Mucosa of descending colon (tissue), 3 donors: ENCODE measurements at regions of chr3 and their contacts with region 1.

Region 1: GRCh38 chr3:71955240-71956068 is 170.5 kb upstream of the PROK2 start:
- DNase-seq: peak; percentile 55 to 84 (median 73)
- ATAC-seq: peak; percentile 73
- H3K4me3 ChIP-seq: no peak overlapping the region
- H3K4me1 ChIP-seq: peaks cover 2% of the 10 kb centered on the region
- CTCF ChIP-seq: peak; percentile 44

Region 2: GRCh38 chr3:71846185-71846584 is 109.3 kb before region 1 on chr3:
- intact Hi-C with region 1: no loop called
- DNase-seq: no peak
- ATAC-seq: no peak
- H3K4me3 ChIP-seq: no peak overlapping the region
- H3K4me1 ChIP-seq: no peaks in the 10 kb centered on the region
- CTCF ChIP-seq: no peak

Region 3: DNA sequence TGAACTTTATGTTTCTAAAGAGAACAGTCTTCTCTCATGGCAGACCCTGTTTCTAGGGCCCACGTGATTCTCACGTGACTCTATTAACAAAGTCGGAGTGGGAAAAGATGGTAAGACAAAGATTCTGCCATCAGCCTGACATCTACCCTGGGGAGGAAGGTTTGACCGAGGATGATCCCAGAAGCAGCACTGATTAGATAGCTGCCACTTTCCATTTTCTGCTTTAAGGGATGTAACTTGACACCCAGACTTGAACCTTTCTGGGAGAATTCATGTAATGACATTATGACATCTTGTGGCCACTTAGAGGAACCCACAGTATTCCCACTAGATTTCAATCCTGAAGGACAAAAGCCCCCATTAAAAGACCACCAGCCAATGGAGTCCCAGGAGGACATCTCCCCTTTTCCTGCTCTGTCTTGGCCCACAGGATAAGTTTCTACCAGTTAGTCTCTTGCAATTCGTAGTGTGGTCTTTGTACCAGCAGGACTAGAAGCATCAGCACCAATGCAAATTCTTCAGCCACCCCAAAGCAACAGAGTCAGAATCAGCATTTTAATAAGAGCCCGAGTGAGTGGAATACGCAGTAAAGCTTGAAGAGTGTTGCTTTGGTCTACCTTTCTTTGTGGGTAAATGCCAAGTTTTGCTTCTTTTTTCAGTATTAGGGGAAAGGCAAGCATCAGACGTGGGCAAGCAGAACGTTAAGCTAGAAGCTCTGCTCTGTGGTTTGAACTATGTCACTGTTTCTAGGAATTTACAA is 310.0 kb after region 1 on chr3:
- intact Hi-C with region 1: loop called in 1 of 2 experiments (anchors 10 kb)
- DNase-seq: no peak
- ATAC-seq: no peak
- H3K4me3 ChIP-seq: no peak overlapping the region
- H3K4me1 ChIP-seq: no peaks in the 10 kb centered on the region
- CTCF ChIP-seq: no peak